ENCODE measurements at regions of chrX and their contacts with region 1.

Region 1: GRCh38 chrX:115642895-115643530 is 82.0 kb downstream of the PLS3 start:
- DNase-seq: peak; percentile 69
- H3K4me3 ChIP-seq: no peak overlapping the region
- H3K27ac ChIP-seq: peak overlapping the region; percentile 8 to 51 (median 38)
- H3K4me1 ChIP-seq: peaks cover 0 to 8% (median 0%) of the 10 kb centered on the region in 4 donors
- H3K27me3 ChIP-seq: peaks cover 0 to under 1% (median 0%) of the 10 kb centered on the region in 3 donors
- CTCF ChIP-seq: peak; percentile 58 to 84 (median 66)
- EP300 ChIP-seq: no peak
- POLR2A ChIP-seq: no peak

Region 2: GRCh38 chrX:115226929-115227328 is 416.1 kb before region 1 on chrX:
- intact Hi-C with region 1: loop called (anchors 5 kb)
- DNase-seq: no peak
- H3K4me3 ChIP-seq: no peak overlapping the region
- H3K27ac ChIP-seq: no peak overlapping the region
- H3K4me1 ChIP-seq: peaks cover 0 to 36% (median 0%) of the 10 kb centered on the region in 4 donors
- H3K27me3 ChIP-seq: no peaks in the 10 kb centered on the region
- CTCF ChIP-seq: peak; percentile 11 to 32 (median 26)
- EP300 ChIP-seq: no peak
- POLR2A ChIP-seq: no peak

Region 3: GRCh38 chrX:115330498-115331168 is 312.4 kb before region 1 on chrX:
- intact Hi-C with region 1: loop called (anchors 1 kb)
- DNase-seq: peak; percentile 71
- H3K4me3 ChIP-seq: peak overlapping the region in 1 of 4 donors; percentile 26
- H3K27ac ChIP-seq: no peak overlapping the region
- H3K4me1 ChIP-seq: no peaks in the 10 kb centered on the region
- H3K27me3 ChIP-seq: no peaks in the 10 kb centered on the region
- CTCF ChIP-seq: peak; percentile 45 to 76 (median 52)
- EP300 ChIP-seq: no peak
- POLR2A ChIP-seq: no peak

Region 4: DNA sequence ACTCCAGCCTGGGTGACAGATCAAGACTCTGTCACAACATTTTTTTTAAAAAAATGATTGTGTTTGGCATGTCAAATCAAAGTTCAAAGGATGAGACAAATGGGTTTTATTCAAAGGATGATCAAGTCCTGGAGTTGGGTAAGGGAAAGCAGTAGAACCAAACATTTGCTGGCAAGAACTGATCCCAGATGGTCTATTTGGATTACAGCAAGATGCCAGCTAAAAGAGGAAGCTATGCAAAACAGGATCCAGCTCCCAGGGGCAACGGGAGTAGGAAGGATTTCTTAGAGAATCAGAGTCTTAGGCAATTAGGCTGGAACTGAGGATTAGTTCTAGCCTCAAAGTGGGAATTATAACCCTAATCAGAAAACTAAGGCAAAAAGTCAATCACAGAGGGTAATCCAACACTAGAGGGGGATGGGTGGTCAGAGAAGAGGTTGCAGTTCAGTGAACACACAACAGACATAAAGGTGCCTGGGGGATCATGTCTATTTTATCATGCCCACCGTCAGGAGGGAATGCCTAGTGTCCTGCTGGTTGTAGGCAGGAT is 215.1 kb before region 1 on chrX:
- intact Hi-C with region 1: no loop called
- DNase-seq: no peak
- H3K4me3 ChIP-seq: no peak overlapping the region
- H3K27ac ChIP-seq: no peak overlapping the region
- H3K4me1 ChIP-seq: no peaks in the 10 kb centered on the region
- H3K27me3 ChIP-seq: no peaks in the 10 kb centered on the region
- CTCF ChIP-seq: no peak
- EP300 ChIP-seq: no peak
- POLR2A ChIP-seq: no peak

Measured in sigmoid colon (tissue), 7 donors.